ENCODE measurements at regions of chr17 and their contacts with region 1.

Region 1: GRCh38 chr17:10618202-10618635 is 38.9 kb downstream of the MYH3 start:
- DNase-seq: peak; percentile 47 to 75
- ATAC-seq: peak; percentile 81 to 88 (median 83)
- H3K4me3 ChIP-seq: no peak overlapping the region
- H3K4me3 Mint-ChIP-seq: no peak overlapping the region
- H3K27ac ChIP-seq: no peak overlapping the region
- H3K27ac Mint-ChIP-seq: no peak overlapping the region
- H3K4me1 ChIP-seq: no peaks in the 10 kb centered on the region
- H3K4me1 Mint-ChIP-seq: peaks cover 0 to 4% of the 10 kb centered on the region in 2 donors
- H3K27me3 ChIP-seq: no peaks in the 10 kb centered on the region
- H3K27me3 Mint-ChIP-seq: peaks cover 6 to 9% of the 10 kb centered on the region in 2 donors
- CTCF ChIP-seq: peak; percentile 82

Region 2: DNA sequence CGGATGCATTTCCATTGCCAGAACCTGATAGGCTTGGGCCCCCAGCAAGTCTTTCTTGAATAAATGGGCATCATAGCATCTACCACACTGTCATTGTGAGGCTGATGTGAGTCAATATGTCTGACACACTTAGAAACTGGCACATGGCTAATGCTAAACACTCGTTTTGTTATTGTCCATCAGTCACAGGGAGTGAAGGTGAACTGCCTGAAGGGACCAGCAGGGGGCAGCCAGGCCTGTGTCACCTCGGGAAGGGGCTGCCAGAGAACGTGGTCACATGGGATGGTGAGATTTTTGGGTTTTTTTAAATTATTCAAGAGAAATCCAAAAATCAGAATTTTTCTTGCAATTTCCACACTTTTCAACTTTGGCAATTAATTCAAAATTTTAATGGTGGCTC is 712.3 kb before region 1 on chr17:
- intact Hi-C with region 1: loop called (anchors 5 kb)
- DNase-seq: peak in 1 of 2 donors; percentile 25
- ATAC-seq: peak in 2 of 3 donors; percentile 60 to 76
- H3K4me3 ChIP-seq: no peak overlapping the region
- H3K4me3 Mint-ChIP-seq: no peak overlapping the region
- H3K27ac ChIP-seq: no peak overlapping the region
- H3K27ac Mint-ChIP-seq: no peak overlapping the region
- H3K4me1 ChIP-seq: no peaks in the 10 kb centered on the region
- H3K4me1 Mint-ChIP-seq: peaks cover 4 to 10% of the 10 kb centered on the region in 2 donors
- H3K27me3 ChIP-seq: no peaks in the 10 kb centered on the region
- H3K27me3 Mint-ChIP-seq: no peaks in the 10 kb centered on the region
- CTCF ChIP-seq: peak; percentile 60

Region 3: GRCh38 chr17:9968902-9969617 is 649.2 kb before region 1 on chr17:
- intact Hi-C with region 1: loop called (anchors 5 kb)
- DNase-seq: no peak
- ATAC-seq: no peak
- H3K4me3 ChIP-seq: no peak overlapping the region
- H3K4me3 Mint-ChIP-seq: no peak overlapping the region
- H3K27ac ChIP-seq: no peak overlapping the region
- H3K27ac Mint-ChIP-seq: peak overlapping the region; percentile 19 to 65
- H3K4me1 ChIP-seq: peaks cover 32% of the 10 kb centered on the region
- H3K4me1 Mint-ChIP-seq: peaks cover 51 to 66% of the 10 kb centered on the region in 2 donors
- H3K27me3 ChIP-seq: no peaks in the 10 kb centered on the region
- H3K27me3 Mint-ChIP-seq: no peaks in the 10 kb centered on the region
- CTCF ChIP-seq: no peak

Region 4: DNA sequence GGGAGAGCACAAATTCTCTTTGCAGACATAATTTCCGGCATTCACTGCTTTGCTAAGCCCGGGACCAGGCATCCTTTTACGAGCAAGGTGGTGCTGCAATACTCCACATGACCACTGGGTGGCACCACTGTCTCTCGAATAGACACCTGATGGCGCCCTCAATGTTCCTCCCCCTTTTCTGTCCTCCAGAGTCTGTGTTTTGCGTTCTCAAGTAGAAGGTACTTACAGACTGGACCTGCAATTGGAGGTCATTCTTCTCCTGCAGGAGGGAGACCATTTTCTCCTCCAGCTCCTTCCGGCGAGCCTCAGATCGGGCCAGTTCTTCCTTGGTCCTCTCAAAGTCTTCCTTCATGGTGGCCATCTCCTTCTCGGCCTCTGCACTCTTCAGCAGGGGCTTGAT is 290.6 kb before region 1 on chr17:
- intact Hi-C with region 1: loop called (anchors 10 kb)
- DNase-seq: peak; percentile 71 to 78
- ATAC-seq: peak; percentile 75 to 95 (median 87)
- H3K4me3 ChIP-seq: no peak overlapping the region
- H3K4me3 Mint-ChIP-seq: no peak overlapping the region
- H3K27ac ChIP-seq: no peak overlapping the region
- H3K27ac Mint-ChIP-seq: no peak overlapping the region
- H3K4me1 ChIP-seq: no peaks in the 10 kb centered on the region
- H3K4me1 Mint-ChIP-seq: peaks cover 0 to 5% of the 10 kb centered on the region in 2 donors
- H3K27me3 ChIP-seq: no peaks in the 10 kb centered on the region
- H3K27me3 Mint-ChIP-seq: peaks cover 13 to 21% of the 10 kb centered on the region in 2 donors
- CTCF ChIP-seq: peak; percentile 94

Region 5: GRCh38 chr17:10697092-10698081 is 79.2 kb after region 1 on chr17 and contains the starts of genes ADPRM and SCO1:
- intact Hi-C with region 1: no loop called
- DNase-seq: peak; percentile 83 to 94
- ATAC-seq: peak; percentile 92 to 99 (median 96)
- H3K4me3 ChIP-seq: peak within 1 kb of the TSS; percentile 81
- H3K4me3 Mint-ChIP-seq: peak within 1 kb of the TSS; percentile 98
- H3K27ac ChIP-seq: peak within 1 kb of the TSS; percentile 83
- H3K27ac Mint-ChIP-seq: peak within 1 kb of the TSS; percentile 93
- H3K4me1 ChIP-seq: peaks cover 24% of the 10 kb centered on the region
- H3K4me1 Mint-ChIP-seq: peaks cover 49 to 50% of the 10 kb centered on the region in 2 donors
- H3K27me3 ChIP-seq: no peaks in the 10 kb centered on the region
- H3K27me3 Mint-ChIP-seq: no peaks in the 10 kb centered on the region
- CTCF ChIP-seq: peak; percentile 43
- total RNA-seq, gene ADPRM: 9.5 to 10.7 (median 9.5) TPM
- total RNA-seq, gene SCO1: 13.4 to 22.9 (median 18.8) TPM